Cardiac septum (tissue), 1 donor: ENCODE measurements at regions of chr20 and their contacts with region 1.

Region 1: GRCh38 chr20:53828682-53829254 is 235.1 kb upstream of the ZNF217 start:
- DNase-seq: no peak

Region 2: DNA sequence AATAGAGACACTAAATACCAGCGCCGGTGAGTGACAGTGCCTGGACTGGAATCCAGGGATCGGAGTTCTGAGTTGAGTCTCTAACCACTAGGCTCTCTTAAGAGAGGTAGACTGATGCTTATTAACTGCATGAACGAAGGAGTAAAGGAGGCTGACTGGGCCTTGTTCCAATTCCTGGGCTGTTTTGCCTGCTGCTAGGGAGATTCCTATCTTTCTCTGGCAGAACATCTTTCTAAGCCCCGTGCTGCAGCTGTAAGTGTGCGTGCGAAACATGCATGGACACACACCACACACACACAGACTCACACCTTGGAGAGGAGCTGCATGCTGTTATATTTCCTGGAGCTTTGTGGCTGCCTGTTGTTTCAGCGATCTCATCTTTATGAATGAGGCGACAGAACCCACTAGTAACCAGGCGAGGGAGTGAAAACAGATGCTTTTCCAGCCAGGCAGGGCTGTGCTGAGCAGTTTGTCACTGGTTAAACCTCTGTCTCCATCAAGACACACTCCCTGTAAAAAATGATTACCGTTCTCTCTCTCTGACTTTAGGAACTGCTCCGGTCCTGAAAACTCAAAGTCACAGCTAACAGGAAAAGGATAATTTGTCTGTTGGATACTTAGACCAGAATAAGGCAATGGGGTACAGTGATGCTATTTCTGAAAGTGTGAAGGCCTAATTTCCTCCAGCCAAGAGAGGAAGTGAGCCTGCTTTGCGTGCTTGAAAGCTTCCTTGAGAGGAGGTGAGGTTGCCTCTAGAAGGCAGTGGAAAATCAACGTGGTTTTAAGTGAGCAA is 77.7 kb before region 1 on chr20:
- intact Hi-C with region 1: no loop called
- DNase-seq: no peak

Region 3: GRCh38 chr20:53773792-53774401 is 54.9 kb before region 1 on chr20:
- intact Hi-C with region 1: loop called (anchors 10 kb)
- DNase-seq: no peak

Region 4: GRCh38 chr20:53869466-53870258 is 40.9 kb after region 1 on chr20:
- intact Hi-C with region 1: loop called (anchors 5 kb)
- DNase-seq: no peak

Region 5: GRCh38 chr20:53915446-53916172 is 86.8 kb after region 1 on chr20:
- intact Hi-C with region 1: loop called (anchors 2 kb)
- DNase-seq: peak; percentile 97